ENCODE measurements at regions of chr2 and their contacts with region 1.

Region 1: DNA sequence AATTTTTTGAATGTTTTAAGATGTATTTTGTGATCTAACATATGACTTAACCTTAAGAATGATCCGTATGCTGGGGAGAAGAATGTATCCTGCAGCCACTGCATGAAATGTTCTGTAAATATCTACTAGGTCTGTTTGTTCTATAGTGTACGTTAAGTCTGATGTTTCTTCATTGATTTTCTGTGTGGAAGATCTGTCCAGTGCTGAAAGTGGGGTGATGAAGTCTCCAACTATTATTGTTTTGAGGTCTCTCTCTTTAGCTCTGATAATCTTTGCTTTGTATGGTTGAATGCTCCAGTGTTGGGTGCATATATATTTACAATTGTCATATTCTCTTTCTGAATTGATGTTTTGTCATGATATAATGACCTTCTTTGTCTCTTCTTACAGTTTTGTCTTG is 82.5 kb upstream of the LHCGR start:
- DNase-seq: no peak
- H3K4me3 Mint-ChIP-seq: no peak overlapping the region
- H3K27ac Mint-ChIP-seq: no peak overlapping the region
- H3K4me1 Mint-ChIP-seq: no peaks in the 10 kb centered on the region
- H3K27me3 Mint-ChIP-seq: no peaks in the 10 kb centered on the region

Region 2: GRCh38 chr2:48738806-48739205 is 99.2 kb before region 1 on chr2:
- CTCF ChIA-PET with region 1: no interaction called
- intact Hi-C with region 1: no loop called
- DNase-seq: no peak
- H3K4me3 Mint-ChIP-seq: no peak overlapping the region
- H3K27ac Mint-ChIP-seq: no peak overlapping the region
- H3K4me1 Mint-ChIP-seq: no peaks in the 10 kb centered on the region
- H3K27me3 Mint-ChIP-seq: peaks cover 5% of the 10 kb centered on the region

Region 3: DNA sequence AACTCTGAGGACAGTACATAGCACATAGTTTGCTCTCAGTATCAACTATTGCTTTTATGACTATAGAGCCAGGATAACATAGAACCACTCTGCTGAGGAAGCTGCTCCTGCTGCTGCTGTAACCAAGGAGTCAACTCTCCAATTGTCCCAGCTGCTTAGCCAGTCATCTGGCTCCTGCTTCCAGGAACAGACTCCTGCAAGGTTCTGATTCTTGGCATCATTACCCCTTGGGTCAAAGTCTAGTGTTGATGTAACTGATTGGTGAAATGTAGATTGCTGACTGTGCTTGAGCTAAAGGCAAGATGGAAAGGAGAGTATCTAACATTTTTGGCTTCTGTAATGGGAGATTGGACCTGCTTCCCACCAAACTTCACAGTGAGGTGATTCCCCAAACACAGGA is 578.2 kb after region 1 on chr2:
- CTCF ChIA-PET with region 1: no interaction called
- intact Hi-C with region 1: loop called (anchors 5 kb)
- DNase-seq: no peak
- H3K4me3 Mint-ChIP-seq: no peak overlapping the region
- H3K27ac Mint-ChIP-seq: no peak overlapping the region
- H3K4me1 Mint-ChIP-seq: no peaks in the 10 kb centered on the region
- H3K27me3 Mint-ChIP-seq: no peaks in the 10 kb centered on the region